ENCODE measurements at regions of chr16 and their contacts with region 1.

Region 1: GRCh38 chr16:57609541-57610401 is 18.7 kb upstream of the ADGRG1 start:
- DNase-seq: peak; percentile 92
- H3K4me3 Mint-ChIP-seq: peak overlapping the region; percentile 45
- H3K27ac Mint-ChIP-seq: peak overlapping the region; percentile 86
- H3K4me1 Mint-ChIP-seq: peaks cover 40% of the 10 kb centered on the region
- H3K27me3 Mint-ChIP-seq: no peaks in the 10 kb centered on the region

Region 2: DNA sequence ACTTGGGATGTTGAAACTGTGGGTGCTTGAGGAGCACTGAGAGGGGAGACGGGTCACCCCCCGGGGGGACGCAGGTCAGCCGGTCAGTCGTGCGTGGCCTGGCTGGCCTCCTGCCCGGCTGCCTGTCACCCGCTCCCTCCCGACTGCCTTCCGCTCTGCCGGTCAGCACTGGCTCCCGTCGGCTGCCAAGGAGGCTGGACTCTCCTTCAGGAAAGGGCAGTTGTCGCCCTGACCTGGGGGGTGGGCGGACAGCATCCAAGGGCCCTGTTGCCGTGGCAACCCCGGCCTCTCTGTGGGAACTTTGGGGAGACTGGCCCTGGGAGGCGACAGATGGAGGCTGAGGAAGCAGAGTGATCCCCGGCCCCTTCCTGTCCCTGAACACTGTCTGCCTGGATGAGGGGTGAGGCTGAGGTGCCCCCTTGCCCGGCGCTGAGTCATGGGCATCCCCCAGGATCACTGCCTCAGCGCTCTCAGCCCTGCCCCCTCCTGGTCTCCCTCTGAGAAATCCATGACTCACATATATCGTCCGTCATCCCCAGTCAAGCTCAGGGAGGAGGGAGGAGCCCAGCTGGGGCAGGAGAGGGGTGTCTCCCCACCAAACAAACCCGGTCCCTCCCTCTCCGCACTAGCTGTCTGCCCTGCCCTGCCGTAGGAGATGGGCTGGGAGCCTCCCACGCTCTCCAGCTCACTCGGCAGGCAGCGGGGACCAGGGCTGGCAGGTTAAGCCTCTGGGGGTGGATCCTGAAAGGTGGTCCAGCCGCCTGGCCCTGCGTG is 18.4 kb after region 1 on chr16 and contains the start of gene ADGRG1:
- CTCF ChIA-PET with region 1: interaction called, 4 read pairs
- intact Hi-C with region 1: loop called (anchors 1 kb)
- DNase-seq: peak; percentile 86
- H3K4me3 Mint-ChIP-seq: no peak within 1 kb of the TSS
- H3K27ac Mint-ChIP-seq: no peak within 1 kb of the TSS
- H3K4me1 Mint-ChIP-seq: peaks cover 12% of the 10 kb centered on the region
- H3K27me3 Mint-ChIP-seq: peaks cover 29% of the 10 kb centered on the region
- total RNA-seq, gene ADGRG1: 0.93 to 1.0 TPM